Left ventricle myocardium inferior (tissue), 1 donor: ENCODE measurements at regions of chr9 and their contacts with region 1.

Region 1: DNA sequence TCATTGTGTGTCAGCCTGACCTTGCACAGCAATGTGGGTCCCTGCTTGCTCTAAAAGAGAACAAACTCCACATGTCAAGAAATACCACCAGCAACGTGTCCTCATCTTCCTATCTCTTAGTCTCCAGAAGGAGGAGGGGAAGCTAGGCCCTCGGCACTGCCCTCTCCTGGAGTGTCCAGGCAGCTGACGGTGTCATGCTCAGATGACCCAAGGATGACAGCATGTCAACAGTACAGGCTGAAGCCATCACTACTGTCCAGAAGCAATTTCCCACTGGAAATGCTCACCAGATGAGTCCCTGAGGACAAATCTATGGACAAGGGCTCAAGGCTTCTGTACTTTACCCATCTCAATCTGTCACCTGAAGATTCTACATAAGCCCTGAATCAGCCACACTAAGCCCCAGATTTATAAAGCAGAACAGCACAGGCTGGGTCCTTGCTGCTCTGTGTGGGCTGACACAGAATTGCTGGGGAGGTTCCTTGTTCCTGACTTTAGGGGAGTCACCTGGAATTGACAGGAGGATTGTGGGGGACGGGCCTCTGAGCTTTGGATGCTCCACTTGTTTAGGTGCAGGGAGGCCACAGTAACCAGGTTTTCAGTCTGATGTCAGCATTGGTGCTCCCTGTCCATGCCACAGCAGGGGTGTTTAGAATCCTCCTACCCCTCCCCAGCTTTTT is 210.2 kb downstream of the DAB2IP start:
- DNase-seq: peak; percentile 37
- H3K4me3 ChIP-seq: no peak overlapping the region
- H3K27ac ChIP-seq: no peak overlapping the region
- H3K4me1 ChIP-seq: peaks cover 27% of the 10 kb centered on the region
- H3K27me3 ChIP-seq: no peaks in the 10 kb centered on the region
- CTCF ChIP-seq: peak; percentile 75

Region 2: DNA sequence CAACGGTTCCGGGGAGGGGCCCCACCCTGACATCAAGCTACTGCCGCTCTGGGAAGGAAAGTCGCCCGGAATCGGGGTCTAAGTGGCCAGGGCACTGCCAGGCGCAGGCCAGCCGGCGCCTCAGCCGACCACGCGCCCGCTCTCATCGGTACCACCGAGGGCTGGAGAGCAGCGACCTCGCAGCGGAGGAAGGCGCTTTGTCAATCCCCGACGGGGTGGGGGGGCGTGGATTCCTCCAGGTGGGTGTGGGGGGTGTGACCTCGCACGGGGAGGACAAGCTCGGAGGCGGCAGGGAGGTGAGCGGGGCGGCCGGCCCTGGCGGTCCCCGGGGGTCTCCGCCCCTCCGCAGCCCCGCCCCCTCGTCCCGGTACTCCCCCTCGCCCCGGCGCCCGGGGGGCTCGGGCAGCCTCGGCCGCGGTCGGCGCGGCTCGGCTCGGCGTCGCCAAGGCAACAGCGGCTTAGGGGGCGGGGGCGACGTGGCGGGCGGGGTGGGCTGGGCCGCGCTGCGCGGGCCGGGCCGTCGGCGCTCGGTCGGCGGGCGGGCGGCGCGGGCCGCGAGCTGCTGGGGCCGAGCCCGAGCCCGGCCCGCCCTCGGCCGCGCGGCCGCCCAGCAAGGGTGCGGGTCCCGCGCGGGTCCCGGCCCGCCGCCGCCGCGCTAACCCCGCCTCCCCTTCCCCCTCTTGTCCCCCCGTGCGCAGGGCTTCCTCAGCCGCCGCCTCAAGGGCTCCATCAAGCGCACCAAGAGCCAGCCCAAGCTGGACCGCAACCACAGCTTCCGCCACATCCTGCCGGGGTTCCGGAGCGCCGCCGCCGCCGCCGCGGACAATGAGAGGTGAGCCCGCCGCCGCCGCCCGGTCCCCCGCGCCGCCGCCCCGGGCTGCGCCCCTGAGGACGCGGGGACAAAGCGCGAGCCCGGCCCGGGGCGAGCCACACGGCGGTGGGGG is 162.7 kb before region 1 on chr9:
- intact Hi-C with region 1: loop called (anchors 10 kb)
- DNase-seq: peak; percentile 77
- H3K4me3 ChIP-seq: peak overlapping the region; percentile 71
- H3K27ac ChIP-seq: peak overlapping the region; percentile 85
- H3K4me1 ChIP-seq: peaks cover 71% of the 10 kb centered on the region
- H3K27me3 ChIP-seq: no peaks in the 10 kb centered on the region
- CTCF ChIP-seq: no peak

Region 3: GRCh38 chr9:122016744-122017143 is 155.1 kb after region 1 on chr9:
- intact Hi-C with region 1: no loop called
- DNase-seq: no peak
- H3K4me3 ChIP-seq: no peak overlapping the region
- H3K27ac ChIP-seq: no peak overlapping the region
- H3K4me1 ChIP-seq: peaks cover 31% of the 10 kb centered on the region
- H3K27me3 ChIP-seq: no peaks in the 10 kb centered on the region
- CTCF ChIP-seq: peak; percentile 51